ENCODE measurements at regions of chr14 and their contacts with region 1.

Region 1: DNA sequence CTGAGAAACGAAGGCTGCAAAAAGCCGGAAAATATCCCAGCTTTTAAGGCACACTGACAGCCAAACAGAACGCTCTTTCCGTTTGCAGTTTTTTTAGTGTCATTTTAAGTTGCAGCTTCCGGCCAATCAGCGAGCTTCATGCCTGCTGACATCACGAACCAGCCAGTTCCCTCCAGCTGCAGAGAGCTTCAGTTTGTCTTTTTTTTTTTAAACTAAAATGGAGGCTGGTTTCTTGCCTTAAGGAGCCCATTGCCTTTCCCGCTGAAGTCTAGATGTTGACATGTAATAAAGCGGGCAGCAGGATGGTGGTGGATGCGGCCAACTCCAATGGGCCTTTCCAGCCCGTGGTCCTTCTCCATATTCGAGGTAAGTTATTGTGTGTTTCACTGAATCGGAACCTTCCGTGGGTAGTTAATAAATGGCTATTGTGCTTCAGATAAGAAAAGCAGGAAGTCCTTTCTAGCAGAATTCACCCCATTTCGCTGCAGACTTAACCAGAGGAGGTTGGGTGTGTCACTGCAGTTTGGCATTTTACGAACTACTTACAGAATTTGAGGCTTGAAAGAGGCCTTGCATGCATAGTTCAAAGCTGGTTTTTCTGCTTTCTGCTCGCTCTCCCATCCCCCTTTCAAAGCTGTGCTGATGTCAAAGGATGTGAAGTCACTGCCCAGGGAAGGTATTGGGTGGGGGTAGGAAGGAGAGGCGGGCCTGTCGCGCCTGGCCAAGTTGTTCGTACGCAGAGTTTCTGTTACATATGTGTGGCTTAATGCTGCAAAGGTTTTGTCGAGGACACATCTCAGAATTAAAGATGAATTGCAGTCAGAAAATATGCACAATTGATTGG is 48.4 kb downstream of the PPP2R5C start:
- DNase-seq: peak; percentile 90
- H3K4me3 Mint-ChIP-seq: peak overlapping the region; percentile 83
- H3K27ac Mint-ChIP-seq: peak overlapping the region; percentile 96
- H3K4me1 Mint-ChIP-seq: peaks cover 48% of the 10 kb centered on the region
- H3K27me3 Mint-ChIP-seq: no peaks in the 10 kb centered on the region

Region 2: GRCh38 chr14:101620031-101620788 is 189.7 kb before region 1 on chr14:
- CTCF ChIA-PET with region 1: no interaction called
- POLR2A ChIA-PET with region 1: no interaction called
- DNase-seq: no peak
- H3K4me3 Mint-ChIP-seq: no peak overlapping the region
- H3K27ac Mint-ChIP-seq: no peak overlapping the region
- H3K4me1 Mint-ChIP-seq: peaks cover 3% of the 10 kb centered on the region
- H3K27me3 Mint-ChIP-seq: peaks cover 15% of the 10 kb centered on the region

Region 3: DNA sequence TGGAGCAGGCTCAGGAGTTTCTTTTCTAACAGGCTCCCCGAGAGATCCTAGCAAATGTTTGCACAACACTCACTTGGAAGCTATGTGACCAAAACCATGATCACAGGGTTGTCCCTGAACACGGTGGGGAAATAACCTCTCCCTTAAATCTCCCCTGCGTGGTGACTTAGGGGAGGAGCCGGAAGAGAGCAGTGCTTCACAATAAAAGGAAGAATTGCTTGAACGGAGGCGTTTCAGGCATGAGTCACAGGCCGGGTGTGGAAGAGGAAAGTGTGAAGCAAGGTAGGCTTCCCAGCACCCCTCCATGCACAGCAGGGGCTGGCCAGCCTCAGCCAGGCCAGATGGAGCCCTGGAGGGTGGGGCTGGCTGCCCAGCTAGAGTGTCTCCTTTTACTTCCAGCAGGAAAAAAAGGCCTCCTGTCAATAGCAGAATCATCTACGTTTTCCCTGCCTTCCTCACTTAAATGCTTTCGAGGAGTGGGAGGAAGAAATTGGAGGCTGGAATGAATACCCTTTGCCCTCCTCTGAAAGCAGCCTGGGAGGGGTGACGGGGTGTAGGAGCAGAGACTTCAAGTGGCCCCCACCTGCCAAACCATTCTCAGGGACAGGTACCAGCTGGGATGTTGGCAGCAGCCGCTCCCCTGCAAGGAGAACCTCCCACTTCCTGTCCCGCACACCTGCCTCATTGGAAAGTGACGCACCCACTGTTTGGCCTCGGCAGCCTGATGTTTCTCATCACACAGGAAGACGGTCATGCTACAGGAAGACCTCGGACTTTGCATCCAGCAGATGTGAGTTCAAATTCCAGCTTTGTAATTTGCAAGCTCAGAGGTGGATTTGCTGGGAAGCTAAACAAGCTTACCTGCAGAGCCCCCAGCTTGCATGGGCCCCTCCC is 78.5 kb before region 1 on chr14:
- CTCF ChIA-PET with region 1: no interaction called
- POLR2A ChIA-PET with region 1: interaction called, 15 read pairs
- DNase-seq: peak; percentile 85
- H3K4me3 Mint-ChIP-seq: peak overlapping the region; percentile 70
- H3K27ac Mint-ChIP-seq: peak overlapping the region; percentile 96
- H3K4me1 Mint-ChIP-seq: peaks cover 48% of the 10 kb centered on the region
- H3K27me3 Mint-ChIP-seq: no peaks in the 10 kb centered on the region

Region 4: DNA sequence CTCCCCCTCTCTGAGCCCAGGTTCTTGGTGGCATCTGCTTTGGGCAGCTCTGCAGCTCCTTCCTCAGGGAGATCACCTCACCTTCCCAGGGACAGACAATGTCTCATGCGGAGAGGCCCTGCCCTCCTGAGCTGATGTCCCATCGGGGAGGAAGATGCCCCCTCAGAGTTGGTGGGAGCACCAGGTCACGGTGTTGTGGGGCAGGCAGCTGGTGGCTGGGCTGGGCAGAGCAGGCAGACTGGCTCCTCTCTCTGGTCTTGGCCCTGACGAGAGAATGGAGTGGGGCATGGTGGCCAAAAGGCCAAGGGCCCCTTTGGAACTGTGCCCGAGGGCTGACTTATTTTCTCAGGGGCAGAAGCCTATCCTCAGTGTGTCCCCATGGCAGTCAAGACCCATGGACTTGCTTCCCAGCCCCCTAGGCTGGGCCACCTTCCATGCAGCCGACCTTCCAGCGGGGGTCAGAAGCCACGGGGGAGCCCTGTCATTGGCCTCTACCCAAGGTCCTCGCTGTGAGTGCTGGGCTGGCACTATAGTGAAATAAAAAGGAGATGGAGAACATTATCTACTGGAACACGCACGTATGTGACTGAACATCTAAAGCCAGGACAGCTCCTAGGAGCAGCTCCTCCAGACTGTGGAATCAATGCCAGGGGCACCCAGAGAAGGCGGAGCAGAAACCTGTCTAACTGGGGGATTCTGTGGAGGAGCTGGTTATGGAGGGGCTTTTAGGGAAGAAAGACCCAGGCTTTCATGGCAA is 26.5 kb before region 1 on chr14:
- CTCF ChIA-PET with region 1: interaction called, 3 read pairs
- POLR2A ChIA-PET with region 1: interaction called, 11 read pairs
- DNase-seq: no peak
- H3K4me3 Mint-ChIP-seq: no peak overlapping the region
- H3K27ac Mint-ChIP-seq: no peak overlapping the region
- H3K4me1 Mint-ChIP-seq: peaks cover 8% of the 10 kb centered on the region
- H3K27me3 Mint-ChIP-seq: peaks cover 18% of the 10 kb centered on the region

Region 5: GRCh38 chr14:101823511-101824120 is 13.7 kb after region 1 on chr14:
- CTCF ChIA-PET with region 1: interaction called, 84 read pairs
- POLR2A ChIA-PET with region 1: interaction called, 823 read pairs
- DNase-seq: peak; percentile 77
- H3K4me3 Mint-ChIP-seq: peak overlapping the region; percentile 84
- H3K27ac Mint-ChIP-seq: peak overlapping the region; percentile 98
- H3K4me1 Mint-ChIP-seq: peaks cover 79% of the 10 kb centered on the region
- H3K27me3 Mint-ChIP-seq: no peaks in the 10 kb centered on the region

Region 6: DNA sequence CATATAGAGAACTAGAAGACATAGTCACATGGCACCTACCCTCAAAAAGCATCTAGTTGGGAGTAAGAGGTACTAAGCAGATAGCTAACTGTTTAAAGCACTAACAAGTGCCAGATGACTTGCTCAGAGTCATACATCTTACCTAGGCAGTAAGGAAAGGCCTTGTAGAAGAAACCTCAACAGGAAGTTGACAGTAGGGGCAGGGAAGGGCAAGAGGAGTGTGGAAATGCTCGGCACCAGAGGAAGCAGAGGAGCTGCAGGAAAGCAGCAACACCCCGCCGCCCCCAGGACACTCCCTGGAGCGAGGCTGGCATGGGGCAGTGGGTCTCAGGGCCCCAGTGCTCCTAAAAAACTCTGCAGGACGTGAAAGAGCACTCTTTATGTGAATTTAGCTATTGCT is 44.5 kb after region 1 on chr14:
- CTCF ChIA-PET with region 1: interaction called, 3 read pairs
- POLR2A ChIA-PET with region 1: interaction called, 18 read pairs
- DNase-seq: no peak
- H3K4me3 Mint-ChIP-seq: no peak overlapping the region
- H3K27ac Mint-ChIP-seq: peak overlapping the region; percentile 22
- H3K4me1 Mint-ChIP-seq: peaks cover 74% of the 10 kb centered on the region
- H3K27me3 Mint-ChIP-seq: no peaks in the 10 kb centered on the region